Posterior cingulate gyrus (tissue), 11 donors: ENCODE measurements at regions of chr14 and their contacts with region 1.

Region 1: DNA sequence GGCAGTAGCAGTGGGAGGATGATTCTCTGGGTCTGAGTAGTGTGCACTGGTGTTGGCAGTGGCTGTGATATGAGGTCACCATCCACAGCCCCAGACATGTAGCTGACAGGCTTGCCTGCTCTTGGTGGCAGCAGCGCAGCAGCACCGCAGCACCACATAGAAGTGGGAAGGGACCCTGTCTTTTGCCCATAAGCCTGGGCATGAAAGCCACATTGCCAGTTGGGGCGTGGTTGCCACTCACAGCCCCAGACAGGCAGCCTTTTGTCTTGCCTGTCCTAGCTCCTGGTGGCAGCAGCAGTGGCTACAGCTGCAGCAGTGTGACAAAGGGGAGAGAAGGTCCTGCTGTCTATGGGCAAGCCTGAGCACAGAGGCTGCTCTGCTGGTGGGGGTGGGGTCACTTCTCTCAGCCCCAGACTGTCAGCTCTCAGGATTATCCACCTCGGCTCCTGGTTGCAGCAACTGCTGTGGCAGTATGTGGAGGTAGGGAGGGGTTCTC is 71.5 kb downstream of the BRMS1L start:
- DNase-seq: peak; percentile 57 to 98 (median 72)

Region 2: DNA sequence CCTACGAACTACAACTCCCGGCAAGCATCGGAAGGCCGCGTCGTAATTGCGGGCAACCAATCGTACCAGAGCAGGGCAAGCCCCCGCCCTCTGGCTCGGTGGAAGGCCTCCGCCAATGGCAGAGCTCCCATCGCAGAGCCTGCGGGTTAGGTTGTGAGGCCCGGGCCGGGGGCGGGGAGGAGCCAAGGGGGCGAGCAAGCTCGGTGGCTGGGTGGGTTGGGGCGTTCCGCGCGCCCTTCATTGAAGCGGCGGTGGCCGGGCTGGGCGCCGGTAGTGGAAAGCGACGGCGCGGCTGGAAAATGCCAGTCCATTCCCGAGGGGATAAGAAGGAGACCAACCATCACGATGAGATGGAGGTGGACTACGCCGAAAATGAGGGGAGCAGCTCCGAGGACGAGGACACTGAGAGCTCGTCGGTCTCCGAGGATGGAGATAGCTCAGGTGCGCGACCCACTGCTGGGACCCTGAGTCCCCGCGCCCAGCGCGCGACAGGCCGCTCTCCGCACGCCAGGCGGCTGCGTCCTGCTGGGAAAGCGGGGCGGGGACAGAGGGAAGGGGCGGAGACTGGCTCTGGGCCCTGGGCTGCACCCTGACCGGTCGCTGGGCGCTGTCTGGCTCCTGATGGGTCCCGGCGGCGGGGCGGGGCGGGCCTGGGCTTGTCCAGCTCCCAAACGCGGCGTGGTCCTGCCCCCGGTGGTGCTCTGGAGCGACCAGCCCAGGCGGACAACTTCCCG is 71.3 kb before region 1 on chr14 and contains the start of gene BRMS1L:
- intact Hi-C with region 1: no loop called
- DNase-seq: peak; percentile 94 to 100 (median 98)

Region 3: DNA sequence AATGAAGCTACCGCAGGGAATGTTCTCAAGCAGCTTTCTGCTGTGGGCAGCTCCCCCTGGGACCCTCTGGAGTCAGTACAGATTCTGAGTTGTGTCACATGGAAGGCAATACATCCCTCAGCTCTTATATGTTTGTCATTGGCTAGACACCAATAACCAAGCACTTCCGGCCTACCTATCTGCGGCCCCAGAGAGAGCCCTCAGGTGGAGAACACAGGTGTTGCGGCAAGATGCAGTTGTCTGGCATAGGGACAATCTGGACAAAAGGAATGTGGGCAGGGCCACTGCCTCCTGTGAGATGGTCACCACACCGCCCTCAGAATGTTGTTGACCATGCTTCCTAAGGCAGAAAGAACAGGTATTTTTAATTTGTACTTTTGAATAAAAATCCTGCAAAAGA is 47.2 kb after region 1 on chr14:
- intact Hi-C with region 1: loop called (anchors 10 kb)
- DNase-seq: no peak

Region 4: GRCh38 chr14:36048667-36049066 is 151.0 kb after region 1 on chr14:
- intact Hi-C with region 1: no loop called
- DNase-seq: peak in 1 of 10 donors; percentile 48